ENCODE measurements at regions of chr10 and their contacts with region 1.

Region 1: DNA sequence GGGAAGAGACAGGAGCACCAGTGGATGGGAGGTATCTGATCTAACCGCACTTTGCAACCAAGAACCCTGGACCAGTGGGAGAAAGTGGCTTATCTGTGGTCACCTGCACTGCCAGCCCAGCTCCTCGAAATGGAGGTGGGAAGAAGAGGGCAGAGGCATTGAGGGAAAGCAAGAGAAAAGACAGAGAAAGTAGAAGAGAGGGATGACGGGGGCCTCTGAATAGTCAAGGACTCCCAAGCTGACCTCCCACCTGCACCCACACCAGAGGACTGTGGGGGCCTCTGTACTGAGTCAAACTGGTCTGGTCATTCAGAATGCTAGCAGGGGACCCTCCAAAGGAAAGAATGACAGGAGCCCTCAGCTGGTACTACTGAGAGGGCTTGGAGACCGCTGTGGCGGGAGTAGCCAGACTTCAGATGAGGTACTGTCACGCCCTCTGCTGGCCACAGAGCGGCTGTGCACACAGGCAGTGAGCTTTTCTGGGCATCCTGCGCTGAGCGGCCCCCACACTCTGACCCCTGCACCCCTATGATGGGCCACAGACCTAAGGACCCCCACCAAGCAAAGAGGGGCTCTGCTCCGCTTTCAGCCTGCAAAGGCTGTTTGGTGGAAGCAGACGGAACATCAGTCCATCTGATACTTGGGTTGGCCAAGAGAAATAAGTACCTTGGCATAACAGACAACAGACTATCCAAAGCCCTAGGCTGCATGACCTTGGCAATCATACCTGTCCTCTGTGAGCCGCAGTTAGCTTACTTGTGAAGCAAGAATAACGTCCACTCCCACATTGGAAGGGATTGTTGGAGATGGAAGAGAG is 112.9 kb downstream of the COL13A1 start:
- DNase-seq: peak; percentile 83
- ATAC-seq: peak; percentile 60

Region 2: DNA sequence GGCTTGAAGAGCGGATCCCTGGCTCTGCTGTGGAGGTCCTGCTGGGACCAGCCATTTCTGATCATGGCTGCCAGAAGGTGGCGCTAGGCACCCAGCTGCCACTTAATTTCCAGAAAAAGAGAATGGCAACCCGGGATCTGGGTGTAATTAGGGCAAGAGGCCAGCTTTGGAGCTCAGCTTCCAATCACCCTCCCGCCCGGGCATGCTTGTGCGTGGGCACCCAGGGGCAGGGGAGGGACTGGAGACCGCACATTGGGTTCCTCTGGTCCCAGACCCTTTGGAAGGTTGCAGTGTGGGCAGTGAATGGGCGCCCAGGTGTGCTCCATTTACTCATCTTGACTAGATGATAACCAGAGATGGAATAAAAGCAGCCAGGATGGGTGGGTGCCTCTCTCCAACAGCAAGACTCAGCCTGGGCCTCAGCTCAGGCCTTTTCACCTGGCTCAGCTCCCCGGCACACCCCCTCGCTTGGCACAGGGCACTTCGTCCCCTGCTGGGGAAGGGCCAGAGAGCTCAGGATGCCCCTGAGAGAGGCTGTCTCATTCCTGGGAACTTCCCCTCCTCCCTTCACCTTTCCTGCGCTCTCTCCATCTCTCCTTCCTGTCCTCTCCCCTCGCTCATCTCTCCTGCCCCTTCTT is 269.8 kb before region 1 on chr10:
- intact Hi-C with region 1: loop called (anchors 2 kb)
- DNase-seq: no peak
- ATAC-seq: peak; percentile 22

Region 3: DNA sequence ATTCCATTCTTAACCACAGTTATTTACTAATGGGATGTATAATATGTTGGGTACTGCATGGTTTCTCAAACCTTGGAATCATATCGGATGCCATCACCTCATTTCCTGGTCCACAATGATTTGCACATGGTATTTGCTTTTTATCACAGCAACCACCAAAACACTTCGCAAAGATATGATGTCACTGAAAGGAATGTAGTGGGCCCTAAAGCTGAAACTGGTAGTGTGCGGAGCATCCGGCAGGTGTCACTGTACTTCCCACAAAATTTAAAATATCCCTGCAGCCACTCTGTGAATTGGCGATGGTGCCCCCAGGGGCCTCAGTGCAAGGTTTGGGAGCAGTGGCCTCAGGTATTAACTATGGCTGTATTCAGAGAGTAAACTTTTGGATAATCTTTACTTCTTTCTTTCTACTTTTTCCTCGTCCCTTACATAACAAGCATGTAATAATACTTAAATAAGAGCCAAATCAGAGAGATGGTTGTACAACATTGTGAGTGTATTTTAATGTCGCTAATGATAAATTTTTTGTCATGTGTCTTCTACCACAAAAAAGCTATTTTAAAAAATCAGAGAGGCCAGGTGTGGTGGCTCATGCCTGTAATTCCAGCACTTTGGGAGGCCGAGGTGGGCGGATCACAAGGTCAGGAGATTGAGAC is 218.4 kb before region 1 on chr10:
- intact Hi-C with region 1: loop called (anchors 2 kb)
- DNase-seq: no peak
- ATAC-seq: no peak

Region 4: GRCh38 chr10:69786791-69787190 is 127.8 kb before region 1 on chr10:
- intact Hi-C with region 1: loop called (anchors 1 kb)
- DNase-seq: no peak
- ATAC-seq: no peak